Activated CD4-positive, alpha-beta memory T cell treated with anti-CD3 and anti-CD28 coated beads for 36 hours (primary cell): ENCODE measurements at regions of chr5 and their contacts with region 1.

Region 1: GRCh38 chr5:178204182-178204894 is at the start of gene HNRNPAB:
- DNase-seq: peak; percentile 96
- H3K4me3 Mint-ChIP-seq: peak within 1 kb of the TSS; percentile 95
- H3K27ac Mint-ChIP-seq: peak within 1 kb of the TSS; percentile 99
- H3K4me1 Mint-ChIP-seq: peaks cover 31% of the 10 kb centered on the region
- H3K27me3 Mint-ChIP-seq: peaks cover 3% of the 10 kb centered on the region
- total RNA-seq, gene HNRNPAB: 313 to 316 TPM

Region 2: GRCh38 chr5:178153573-178154343 is 50.6 kb before region 1 on chr5 and contains the start of gene NHP2:
- CTCF ChIA-PET with region 1: no interaction called
- POLR2A ChIA-PET with region 1: interaction called, 10 read pairs
- intact Hi-C with region 1: loop called (anchors 5 kb)
- DNase-seq: peak; percentile 99
- H3K4me3 Mint-ChIP-seq: peak within 1 kb of the TSS; percentile 93
- H3K27ac Mint-ChIP-seq: peak within 1 kb of the TSS; percentile 88
- H3K4me1 Mint-ChIP-seq: peaks cover 48% of the 10 kb centered on the region
- H3K27me3 Mint-ChIP-seq: no peaks in the 10 kb centered on the region
- total RNA-seq, gene NHP2: 231 to 246 TPM

Region 3: DNA sequence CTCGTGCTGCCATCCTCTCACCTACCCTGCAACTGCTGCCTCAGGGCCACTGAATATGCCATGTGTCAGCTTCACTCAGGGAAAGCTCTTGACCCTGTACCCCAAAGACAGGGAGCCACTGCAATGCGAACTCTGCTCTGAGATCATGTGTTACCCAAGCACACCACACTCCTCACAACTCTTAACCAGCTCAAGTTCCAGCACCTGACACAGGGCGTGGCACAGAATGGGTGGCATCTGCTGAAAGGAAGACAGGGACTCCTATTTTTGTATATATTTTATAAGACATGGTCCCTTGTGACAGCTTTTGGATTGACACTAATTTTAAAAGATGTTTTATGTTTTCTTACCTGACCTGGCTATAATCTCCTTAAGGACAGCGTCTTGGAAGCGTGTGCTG is 17.5 kb after region 1 on chr5:
- CTCF ChIA-PET with region 1: no interaction called
- POLR2A ChIA-PET with region 1: no interaction called
- intact Hi-C with region 1: no loop called
- DNase-seq: no peak
- H3K4me3 Mint-ChIP-seq: no peak overlapping the region
- H3K27ac Mint-ChIP-seq: no peak overlapping the region
- H3K4me1 Mint-ChIP-seq: peaks cover 9% of the 10 kb centered on the region
- H3K27me3 Mint-ChIP-seq: no peaks in the 10 kb centered on the region

Region 4: DNA sequence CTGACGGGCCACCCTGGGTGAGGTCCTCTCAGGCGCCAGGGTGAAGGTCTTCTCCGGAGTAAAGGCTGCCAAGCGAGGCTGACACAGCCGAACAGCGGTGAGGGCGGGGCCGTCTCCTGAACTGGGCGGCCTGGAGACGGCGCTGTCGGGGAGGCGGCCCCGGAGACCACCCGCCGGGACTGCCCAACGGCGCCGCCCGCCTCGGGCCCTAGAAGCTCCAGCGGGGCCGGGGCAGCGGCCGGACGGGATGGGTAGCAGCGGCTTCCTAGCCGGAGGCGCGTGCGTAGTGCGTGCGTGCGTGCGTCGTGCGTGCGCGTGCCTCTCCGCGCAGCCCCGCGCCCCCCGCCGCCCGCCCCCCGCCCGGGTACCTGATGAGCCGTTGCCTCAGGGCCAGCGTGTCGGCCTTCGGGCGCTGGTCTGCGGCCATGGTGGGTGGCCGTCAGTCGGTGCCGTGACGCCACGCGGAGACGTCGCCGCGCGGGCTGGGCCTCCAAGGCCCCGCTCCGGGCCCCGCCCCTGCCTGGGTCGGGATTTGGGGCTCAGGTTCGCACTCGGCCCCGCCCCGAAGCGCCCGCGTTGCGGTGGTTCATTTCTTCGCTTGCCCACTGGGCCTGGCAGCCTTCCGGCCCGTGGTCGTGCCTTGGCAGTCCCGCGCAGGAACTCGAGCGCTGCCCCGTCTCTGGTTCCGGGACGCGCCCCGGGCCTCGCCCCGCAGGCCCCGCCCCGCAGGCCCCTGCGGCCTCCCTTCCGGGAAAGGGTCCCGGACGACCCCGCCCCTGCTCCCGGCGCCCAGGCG is 28.0 kb after region 1 on chr5 and contains the start of gene PHYKPL:
- CTCF ChIA-PET with region 1: interaction called, 5 read pairs
- POLR2A ChIA-PET with region 1: interaction called, 20 read pairs
- intact Hi-C with region 1: loop called (anchors 2 kb)
- DNase-seq: peak; percentile 77
- H3K4me3 Mint-ChIP-seq: peak within 1 kb of the TSS; percentile 84
- H3K27ac Mint-ChIP-seq: peak within 1 kb of the TSS; percentile 83
- H3K4me1 Mint-ChIP-seq: peaks cover 49% of the 10 kb centered on the region
- H3K27me3 Mint-ChIP-seq: no peaks in the 10 kb centered on the region
- total RNA-seq, gene PHYKPL: 49.3 to 58.0 TPM

Region 5: GRCh38 chr5:178626484-178627258 is 422.3 kb after region 1 on chr5 and contains the start of gene CLK4:
- CTCF ChIA-PET with region 1: no interaction called
- POLR2A ChIA-PET with region 1: no interaction called
- intact Hi-C with region 1: loop called (anchors 10 kb)
- DNase-seq: peak; percentile 97
- H3K4me3 Mint-ChIP-seq: peak within 1 kb of the TSS; percentile 92
- H3K27ac Mint-ChIP-seq: peak within 1 kb of the TSS; percentile 98
- H3K4me1 Mint-ChIP-seq: peaks cover 28% of the 10 kb centered on the region
- H3K27me3 Mint-ChIP-seq: no peaks in the 10 kb centered on the region
- total RNA-seq, gene CLK4: 25.1 to 26.0 TPM